ENCODE measurements at regions of chr5 and their contacts with region 1.

Region 1: GRCh38 chr5:176447982-176448608 is at the start of gene FAF2:
- DNase-seq: peak; percentile 99
- ATAC-seq: peak; percentile 89
- H3K4me3 ChIP-seq: peak within 1 kb of the TSS; percentile 74
- H3K27ac ChIP-seq: peak within 1 kb of the TSS; percentile 92
- H3K4me1 ChIP-seq: peaks cover 3% of the 10 kb centered on the region
- H3K27me3 ChIP-seq: no peaks in the 10 kb centered on the region
- CTCF ChIP-seq: peak; percentile 99
- POLR2A ChIP-seq: peak; percentile 96
- RAD21 ChIP-seq: peak; percentile 32; the same call in 1 of the 2 replicates
- total RNA-seq, gene FAF2: 47.0 and 50.3 TPM in 2 replicates

Region 2: GRCh38 chr5:176389135-176390123 is 58.7 kb before region 1 on chr5:
- CTCF ChIA-PET with region 1: no interaction called
- POLR2A ChIA-PET with region 1: no interaction called
- dilution Hi-C with region 1: no loop called
- in situ Hi-C with region 1: no loop called
- intact Hi-C with region 1: no loop called
- DNase-seq: no peak
- ATAC-seq: peak; percentile 40
- H3K4me3 ChIP-seq: peak overlapping the region; percentile 73
- H3K27ac ChIP-seq: peak overlapping the region; percentile 95
- H3K4me1 ChIP-seq: no peaks in the 10 kb centered on the region
- H3K27me3 ChIP-seq: no peaks in the 10 kb centered on the region
- CTCF ChIP-seq: no peak
- POLR2A ChIP-seq: no peak
- RAD21 ChIP-seq: no peak

Region 3: GRCh38 chr5:176436661-176437071 is 11.4 kb before region 1 on chr5:
- CTCF ChIA-PET with region 1: interaction called, 10 read pairs
- POLR2A ChIA-PET with region 1: no interaction called
- dilution Hi-C with region 1: no loop called
- in situ Hi-C with region 1: no loop called
- intact Hi-C with region 1: no loop called
- DNase-seq: peak; percentile 88
- ATAC-seq: peak; percentile 89
- H3K4me3 ChIP-seq: no peak overlapping the region
- H3K27ac ChIP-seq: no peak overlapping the region
- H3K4me1 ChIP-seq: peaks cover 5% of the 10 kb centered on the region
- H3K27me3 ChIP-seq: peaks cover 5% of the 10 kb centered on the region
- CTCF ChIP-seq: no peak
- POLR2A ChIP-seq: no peak
- RAD21 ChIP-seq: no peak

Measured in IMR-90 (cell line).